ENCODE measurements at regions of chr4 and their contacts with region 1.

Region 1: GRCh38 chr4:140359562-140360427 is 13.7 kb upstream of the SCOC start:
- DNase-seq: peak; percentile 90
- H3K4me3 Mint-ChIP-seq: no peak overlapping the region
- H3K27ac Mint-ChIP-seq: no peak overlapping the region
- H3K4me1 Mint-ChIP-seq: peaks cover 8% of the 10 kb centered on the region
- H3K27me3 Mint-ChIP-seq: peaks cover 13% of the 10 kb centered on the region
- CTCF ChIP-seq: peak; percentile 80

Region 2: DNA sequence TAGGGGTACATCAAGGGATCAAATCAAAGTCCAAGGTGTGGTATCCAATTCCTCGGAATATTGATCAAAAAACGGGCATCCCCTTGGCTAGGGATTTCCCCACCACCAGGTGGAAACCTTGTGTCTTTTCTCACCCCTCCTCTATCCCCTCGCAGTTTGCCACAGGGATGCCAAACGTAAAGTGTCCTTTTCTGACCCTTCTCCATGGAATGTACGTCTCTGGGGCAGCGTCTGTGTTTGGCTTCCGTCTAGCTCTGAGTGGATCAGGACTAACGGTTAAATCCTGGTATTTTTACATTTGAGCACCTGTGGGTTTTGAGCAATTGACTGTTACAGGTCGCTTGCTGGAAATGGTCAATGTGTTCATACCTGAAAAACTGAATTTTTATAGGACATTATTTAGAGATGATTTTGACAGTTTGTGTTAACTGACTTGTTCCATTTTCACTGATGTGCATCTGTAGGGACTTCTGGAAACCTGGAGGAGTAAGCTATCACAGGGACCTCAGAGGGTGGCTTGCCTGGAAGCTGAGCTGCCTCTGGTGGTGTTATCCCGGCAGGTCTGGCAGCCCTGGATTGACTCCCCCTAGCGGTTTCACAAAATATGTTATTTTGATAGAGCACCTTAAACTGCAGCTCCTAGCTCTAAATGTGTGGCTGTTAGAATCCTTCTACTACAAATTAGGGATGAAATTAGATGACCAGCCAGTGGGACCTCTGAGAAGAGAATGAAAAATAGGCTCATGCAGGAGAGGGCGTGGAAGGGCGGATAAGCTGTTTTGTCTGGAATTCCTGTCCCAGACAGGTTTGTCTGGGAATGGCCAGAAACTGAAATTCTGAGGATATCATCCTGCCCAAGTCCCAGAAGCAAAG is 702.9 kb before region 1 on chr4:
- CTCF ChIA-PET with region 1: interaction called, 32 read pairs
- POLR2A ChIA-PET with region 1: interaction called, 3 read pairs
- intact Hi-C with region 1: loop called (anchors 1 kb)
- DNase-seq: peak; percentile 83
- H3K4me3 Mint-ChIP-seq: peak overlapping the region; percentile 64
- H3K27ac Mint-ChIP-seq: peak overlapping the region; percentile 85
- H3K4me1 Mint-ChIP-seq: peaks cover 25% of the 10 kb centered on the region
- H3K27me3 Mint-ChIP-seq: no peaks in the 10 kb centered on the region
- CTCF ChIP-seq: peak; percentile 63

Region 3: GRCh38 chr4:140343303-140343702 is 16.5 kb before region 1 on chr4:
- CTCF ChIA-PET with region 1: interaction called, 41 read pairs
- POLR2A ChIA-PET with region 1: interaction called, 3 read pairs
- intact Hi-C with region 1: no loop called
- DNase-seq: peak; percentile 68
- H3K4me3 Mint-ChIP-seq: no peak overlapping the region
- H3K27ac Mint-ChIP-seq: no peak overlapping the region
- H3K4me1 Mint-ChIP-seq: peaks cover 5% of the 10 kb centered on the region
- H3K27me3 Mint-ChIP-seq: no peaks in the 10 kb centered on the region
- CTCF ChIP-seq: no peak

Region 4: GRCh38 chr4:140523857-140524742 is 164.3 kb after region 1 on chr4 and contains the start of gene ELMOD2:
- CTCF ChIA-PET with region 1: interaction called, 5 read pairs
- POLR2A ChIA-PET with region 1: no interaction called
- intact Hi-C with region 1: loop called (anchors 1 kb)
- DNase-seq: peak; percentile 97
- H3K4me3 Mint-ChIP-seq: peak within 1 kb of the TSS; percentile 76
- H3K27ac Mint-ChIP-seq: peak within 1 kb of the TSS; percentile 47
- H3K4me1 Mint-ChIP-seq: no peaks in the 10 kb centered on the region
- H3K27me3 Mint-ChIP-seq: no peaks in the 10 kb centered on the region
- CTCF ChIP-seq: peak; percentile 84
- total RNA-seq, gene ELMOD2: 29.2 and 45.0 TPM in 2 replicates

Region 5: DNA sequence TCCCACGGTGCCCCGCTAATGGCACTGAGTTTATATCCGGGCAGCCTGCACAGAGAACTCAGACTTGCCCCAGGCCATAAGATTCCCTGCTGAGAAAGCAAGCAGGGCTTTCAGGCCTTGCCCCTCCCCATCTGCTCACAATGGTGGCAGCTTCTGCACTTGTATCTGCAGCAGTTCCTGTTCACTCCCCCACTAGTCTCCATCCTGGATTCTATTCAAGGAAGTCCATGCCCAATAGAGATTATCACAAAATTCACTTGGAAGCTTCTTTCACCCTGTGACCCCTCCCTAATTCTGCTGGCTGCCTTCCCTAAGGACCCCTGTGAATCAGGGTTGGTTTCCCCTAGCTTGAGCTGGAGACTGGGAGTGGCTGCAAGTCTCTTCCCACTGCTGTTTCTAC is 243.5 kb after region 1 on chr4:
- CTCF ChIA-PET with region 1: interaction called, 99 read pairs
- POLR2A ChIA-PET with region 1: interaction called, 3 read pairs
- intact Hi-C with region 1: no loop called
- DNase-seq: no peak
- H3K4me3 Mint-ChIP-seq: no peak overlapping the region
- H3K27ac Mint-ChIP-seq: no peak overlapping the region
- H3K4me1 Mint-ChIP-seq: no peaks in the 10 kb centered on the region
- H3K27me3 Mint-ChIP-seq: no peaks in the 10 kb centered on the region
- CTCF ChIP-seq: no peak

Region 6: GRCh38 chr4:140851032-140851636 is 491.3 kb after region 1 on chr4:
- CTCF ChIA-PET with region 1: interaction called, 53 read pairs
- POLR2A ChIA-PET with region 1: no interaction called
- intact Hi-C with region 1: loop called (anchors 1 kb)
- DNase-seq: peak; percentile 79
- H3K4me3 Mint-ChIP-seq: no peak overlapping the region
- H3K27ac Mint-ChIP-seq: no peak overlapping the region
- H3K4me1 Mint-ChIP-seq: peaks cover 15% of the 10 kb centered on the region
- H3K27me3 Mint-ChIP-seq: no peaks in the 10 kb centered on the region
- CTCF ChIP-seq: peak; percentile 82